ENCODE measurements at regions of chr2 and their contacts with region 1.

Region 1: GRCh38 chr2:137947728-137948336 is 16.4 kb upstream of the HNMT start:
- DNase-seq: peak; percentile 12
- CTCF ChIP-seq: peak; percentile 60

Region 2: DNA sequence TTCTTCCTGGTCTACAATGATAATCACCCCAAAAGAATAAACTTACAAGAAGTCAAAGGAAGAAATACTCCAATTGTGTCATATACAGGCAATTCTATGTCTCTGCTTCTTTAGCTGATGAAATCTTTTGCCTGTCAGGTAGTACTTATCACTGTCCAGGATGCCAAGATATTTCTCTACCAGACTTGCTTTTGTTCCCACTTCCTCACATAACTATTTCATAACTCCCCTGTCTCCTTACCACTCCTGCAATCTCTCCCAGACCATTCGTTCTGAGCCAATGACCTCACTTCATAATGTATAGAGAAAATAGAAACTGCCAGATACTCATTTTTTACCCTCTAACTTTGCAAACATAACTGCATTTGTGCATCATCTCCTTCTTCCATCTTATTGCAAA is 55.6 kb after region 1 on chr2:
- in situ Hi-C with region 1: no loop called
- DNase-seq: no peak
- CTCF ChIP-seq: no peak

Region 3: GRCh38 chr2:138090330-138090729 is 142.5 kb after region 1 on chr2:
- in situ Hi-C with region 1: loop called (anchors 10 kb)
- DNase-seq: peak; percentile 37
- CTCF ChIP-seq: peak; percentile 45

Measured in GM13977 (cell line).